ENCODE measurements at regions of chr5 and their contacts with region 1.

Region 1: GRCh38 chr5:138464008-138464387 is 1.3 kb upstream of the EGR1 start:
- DNase-seq: peak; percentile 89 to 96 (median 94)
- H3K4me3 ChIP-seq: peak overlapping the region; percentile 94
- H3K4me3 Mint-ChIP-seq: peak overlapping the region; percentile 87 to 96 (median 90)
- H3K27ac ChIP-seq: peak overlapping the region; percentile 95
- H3K27ac Mint-ChIP-seq: peak overlapping the region; percentile 90 to 98 (median 94)
- H3K4me1 ChIP-seq: peaks cover 42% of the 10 kb centered on the region
- H3K4me1 Mint-ChIP-seq: peaks cover 39 to 60% (median 51%) of the 10 kb centered on the region in 3 donors
- H3K27me3 ChIP-seq: no peaks in the 10 kb centered on the region
- H3K27me3 Mint-ChIP-seq: no peaks in the 10 kb centered on the region

Region 2: DNA sequence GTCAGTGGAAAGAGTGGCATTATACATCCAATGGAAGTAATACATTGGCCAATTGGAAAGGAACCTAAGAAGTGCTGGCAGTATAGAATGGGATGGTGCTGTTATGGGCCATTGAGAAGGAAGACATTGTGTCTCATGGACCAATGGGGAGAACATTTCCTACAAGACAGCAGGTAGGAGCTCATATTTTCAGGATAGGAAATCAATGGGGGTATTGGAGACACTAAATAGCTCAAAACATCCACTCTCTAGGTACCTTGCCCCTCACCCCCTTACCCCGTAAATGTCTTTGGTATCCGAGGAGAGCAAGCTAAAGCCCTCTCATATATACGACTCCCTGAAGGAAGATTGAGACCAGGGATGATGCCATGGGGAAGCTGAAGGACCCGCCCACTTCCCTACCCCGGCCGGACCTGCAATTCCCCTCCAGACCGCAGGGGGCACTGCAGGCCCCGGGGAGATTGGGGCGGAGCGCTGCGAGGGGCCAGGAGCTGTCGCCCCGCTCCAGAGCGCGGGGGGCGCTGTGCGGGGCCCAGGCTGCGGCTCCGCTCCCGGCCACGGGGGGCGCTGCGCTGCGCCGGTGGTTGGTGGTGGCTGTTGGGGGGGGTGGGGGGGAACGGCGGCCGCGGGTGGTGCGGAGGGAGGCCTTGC is 111.8 kb before region 1 on chr5 and contains the start of gene KDM3B:
- CTCF ChIA-PET with region 1: interaction called, 5 read pairs
- POLR2A ChIA-PET with region 1: interaction called, 13 read pairs
- DNase-seq: peak; percentile 84 to 96 (median 93)
- H3K4me3 ChIP-seq: peak within 1 kb of the TSS; percentile 84
- H3K4me3 Mint-ChIP-seq: peak within 1 kb of the TSS; percentile 90 to 100 (median 96)
- H3K27ac ChIP-seq: peak within 1 kb of the TSS; percentile 88
- H3K27ac Mint-ChIP-seq: peak within 1 kb of the TSS; percentile 91 to 99 (median 96)
- H3K4me1 ChIP-seq: peaks cover 25% of the 10 kb centered on the region
- H3K4me1 Mint-ChIP-seq: peaks cover 48 to 56% (median 52%) of the 10 kb centered on the region in 3 donors
- H3K27me3 ChIP-seq: no peaks in the 10 kb centered on the region
- H3K27me3 Mint-ChIP-seq: peaks cover 0 to 12% of the 10 kb centered on the region in 2 donors
- total RNA-seq, gene KDM3B: 42.4 to 44.7 TPM

Region 3: DNA sequence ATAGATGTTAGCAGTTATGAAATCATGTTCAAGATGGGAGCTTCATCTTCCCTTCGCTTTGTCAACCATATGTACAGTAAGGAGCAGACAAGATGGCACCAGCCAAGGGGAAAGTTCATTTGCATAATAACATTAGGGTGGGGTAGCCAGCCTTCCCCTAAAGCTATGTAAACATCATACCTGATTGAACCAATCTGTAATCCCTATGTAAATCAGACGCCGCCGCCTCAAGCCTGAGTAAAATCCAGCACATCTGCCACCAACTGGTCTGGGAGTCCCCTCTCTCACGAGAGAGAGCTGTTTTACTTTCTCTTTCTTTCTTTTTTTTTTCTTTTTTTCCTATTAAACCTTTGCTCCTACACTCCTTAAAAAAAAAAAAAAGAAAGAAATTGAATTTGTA is 56.0 kb before region 1 on chr5:
- CTCF ChIA-PET with region 1: no interaction called
- POLR2A ChIA-PET with region 1: no interaction called
- DNase-seq: no peak
- H3K4me3 ChIP-seq: no peak overlapping the region
- H3K4me3 Mint-ChIP-seq: no peak overlapping the region
- H3K27ac ChIP-seq: no peak overlapping the region
- H3K27ac Mint-ChIP-seq: peak overlapping the region in 7 of 8 donors; percentile 13 to 92 (median 63)
- H3K4me1 ChIP-seq: no peaks in the 10 kb centered on the region
- H3K4me1 Mint-ChIP-seq: peaks cover 1 to 13% (median 12%) of the 10 kb centered on the region in 3 donors
- H3K27me3 ChIP-seq: no peaks in the 10 kb centered on the region
- H3K27me3 Mint-ChIP-seq: no peaks in the 10 kb centered on the region

Region 4: DNA sequence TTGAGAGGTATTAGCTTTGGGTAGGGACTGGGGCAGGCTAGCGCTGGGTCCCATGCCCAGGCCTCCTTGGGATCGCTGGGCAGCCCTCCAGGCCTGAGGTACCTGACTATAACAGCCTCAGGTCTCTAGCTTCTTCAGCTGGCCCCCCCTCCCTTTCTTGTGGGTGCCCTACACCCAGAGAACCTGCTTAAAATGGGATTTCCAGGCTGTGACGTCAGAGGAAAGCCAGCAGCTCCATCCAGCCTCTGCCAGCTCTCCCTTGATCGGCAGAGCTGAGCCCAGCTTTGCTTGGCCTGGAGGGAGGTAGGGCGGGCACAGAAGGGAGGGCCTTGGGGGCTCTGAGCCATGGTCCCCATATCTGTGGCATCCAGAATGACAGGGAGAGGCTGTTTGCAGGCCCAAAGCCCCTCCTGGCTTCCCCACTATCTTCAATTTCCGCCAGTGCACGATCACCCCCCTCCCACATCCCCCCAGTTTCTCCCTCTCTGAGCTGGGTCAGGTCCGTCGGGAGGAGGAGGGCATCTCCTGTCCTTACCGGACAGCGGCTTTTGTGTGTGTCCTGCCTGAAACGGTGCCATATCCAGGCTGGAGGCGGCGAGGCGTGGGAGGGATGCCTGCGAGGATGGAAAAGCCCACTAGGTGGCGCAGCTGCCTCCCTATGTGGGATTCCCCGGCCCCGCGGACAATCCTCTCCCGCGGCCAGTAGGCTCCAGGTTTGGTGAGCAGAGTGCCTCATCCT is 14.3 kb before region 1 on chr5:
- CTCF ChIA-PET with region 1: interaction called, 102 read pairs
- POLR2A ChIA-PET with region 1: interaction called, 5 read pairs
- DNase-seq: peak; percentile 63 to 81 (median 70)
- H3K4me3 ChIP-seq: no peak overlapping the region
- H3K4me3 Mint-ChIP-seq: peak overlapping the region in 3 of 7 donors; percentile 15 to 51 (median 39)
- H3K27ac ChIP-seq: no peak overlapping the region
- H3K27ac Mint-ChIP-seq: peak overlapping the region in 5 of 8 donors; percentile 45 to 89 (median 74)
- H3K4me1 ChIP-seq: peaks cover 8% of the 10 kb centered on the region
- H3K4me1 Mint-ChIP-seq: peaks cover 5% of the 10 kb centered on the region in 3 donors
- H3K27me3 ChIP-seq: no peaks in the 10 kb centered on the region
- H3K27me3 Mint-ChIP-seq: no peaks in the 10 kb centered on the region

Region 5: GRCh38 chr5:138498376-138498775 is 34.4 kb after region 1 on chr5:
- CTCF ChIA-PET with region 1: interaction called, 45 read pairs
- POLR2A ChIA-PET with region 1: interaction called, 3 read pairs
- DNase-seq: no peak
- H3K4me3 ChIP-seq: no peak overlapping the region
- H3K4me3 Mint-ChIP-seq: no peak overlapping the region
- H3K27ac ChIP-seq: no peak overlapping the region
- H3K27ac Mint-ChIP-seq: no peak overlapping the region
- H3K4me1 ChIP-seq: no peaks in the 10 kb centered on the region
- H3K4me1 Mint-ChIP-seq: no peaks in the 10 kb centered on the region
- H3K27me3 ChIP-seq: no peaks in the 10 kb centered on the region
- H3K27me3 Mint-ChIP-seq: peaks cover 0 to 11% of the 10 kb centered on the region in 2 donors

Region 6: GRCh38 chr5:138542956-138543729 is 79.1 kb after region 1 on chr5 and contains the start of gene ETF1:
- CTCF ChIA-PET with region 1: interaction called, 17 read pairs
- POLR2A ChIA-PET with region 1: interaction called, 19 read pairs
- DNase-seq: peak; percentile 99 to 100 (median 100)
- H3K4me3 ChIP-seq: peak within 1 kb of the TSS; percentile 89
- H3K4me3 Mint-ChIP-seq: peak within 1 kb of the TSS; percentile 96 to 100 (median 98)
- H3K27ac ChIP-seq: peak within 1 kb of the TSS; percentile 99
- H3K27ac Mint-ChIP-seq: peak within 1 kb of the TSS; percentile 99 to 100 (median 100)
- H3K4me1 ChIP-seq: peaks cover 75% of the 10 kb centered on the region
- H3K4me1 Mint-ChIP-seq: peaks cover 71 to 94% (median 75%) of the 10 kb centered on the region in 3 donors
- H3K27me3 ChIP-seq: no peaks in the 10 kb centered on the region
- H3K27me3 Mint-ChIP-seq: no peaks in the 10 kb centered on the region
- total RNA-seq, gene ETF1: 239 to 246 TPM